SK-N-SH (cell line): ENCODE measurements at regions of chr10 and their contacts with region 1.

Region 1: DNA sequence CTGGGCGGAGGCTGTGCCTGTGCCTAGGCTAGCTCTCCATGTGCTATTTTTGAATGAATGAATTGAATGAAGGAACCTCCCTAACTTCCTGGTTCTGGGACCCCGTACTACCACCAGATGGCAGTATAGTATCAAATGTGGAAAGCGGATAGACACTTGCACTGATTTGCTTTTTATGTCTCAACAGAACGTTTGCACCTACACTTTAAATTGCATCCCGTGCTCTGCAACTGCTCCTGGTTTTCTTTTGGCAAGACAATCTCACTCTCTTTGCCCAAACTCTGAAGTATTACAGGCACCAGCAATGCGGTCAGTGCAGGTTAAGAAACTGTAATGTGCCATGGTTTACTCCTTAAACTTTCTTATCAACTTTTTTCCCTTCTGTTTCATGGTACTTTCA is 6.5 kb downstream of the FZD8 start:
- DNase-seq: peak; percentile 65
- H3K4me3 ChIP-seq: no peak overlapping the region; a peak in 1 of 4 replicates
- H3K27ac ChIP-seq: no peak overlapping the region
- H3K4me1 ChIP-seq: peaks cover 7 to 9% of the 10 kb centered on the region in 2 experiments; a peak in 2 of 4 replicates
- H3K27me3 ChIP-seq: no peaks in the 10 kb centered on the region
- CTCF ChIP-seq: peak; percentile 91
- EP300 ChIP-seq: no peak
- RAD21 ChIP-seq: peak; percentile 95

Region 2: GRCh38 chr10:35613597-35614226 is 21.9 kb before region 1 on chr10:
- CTCF ChIA-PET with region 1: interaction called, 12 read pairs
- POLR2A ChIA-PET with region 1: no interaction called
- DNase-seq: no peak
- H3K4me3 ChIP-seq: no peak overlapping the region
- H3K27ac ChIP-seq: no peak overlapping the region
- H3K4me1 ChIP-seq: no peaks in the 10 kb centered on the region
- H3K27me3 ChIP-seq: peaks cover 13% of the 10 kb centered on the region
- CTCF ChIP-seq: peak; percentile 67
- EP300 ChIP-seq: no peak
- RAD21 ChIP-seq: peak; percentile 45

Region 3: GRCh38 chr10:35795131-35795819 is 159.7 kb after region 1 on chr10:
- CTCF ChIA-PET with region 1: no interaction called
- POLR2A ChIA-PET with region 1: no interaction called
- DNase-seq: no peak
- H3K4me3 ChIP-seq: no peak overlapping the region
- H3K27ac ChIP-seq: no peak overlapping the region
- H3K4me1 ChIP-seq: no peaks in the 10 kb centered on the region
- H3K27me3 ChIP-seq: no peaks in the 10 kb centered on the region
- CTCF ChIP-seq: no peak
- EP300 ChIP-seq: no peak
- RAD21 ChIP-seq: no peak

Region 4: DNA sequence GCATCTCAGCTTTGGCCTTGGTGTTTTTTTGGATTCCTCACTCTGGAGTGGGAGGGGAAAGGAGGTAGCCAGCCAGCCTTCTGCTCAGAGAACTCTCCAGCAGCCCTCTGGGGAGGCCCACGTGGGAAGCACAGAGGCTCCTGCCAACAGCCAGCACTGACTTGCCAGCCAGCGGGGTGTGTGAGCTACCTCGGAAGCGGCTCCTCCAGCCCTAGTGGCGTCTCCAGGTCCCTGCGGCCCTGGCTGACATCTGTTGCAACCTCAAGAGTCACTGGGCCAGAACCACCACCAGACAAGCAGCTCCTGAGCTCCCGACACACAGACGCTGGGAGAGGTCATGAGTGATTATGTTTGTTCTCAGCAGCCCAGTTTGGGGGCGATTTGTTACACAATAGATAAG is 186.7 kb after region 1 on chr10:
- CTCF ChIA-PET with region 1: no interaction called
- POLR2A ChIA-PET with region 1: no interaction called
- DNase-seq: no peak
- H3K4me3 ChIP-seq: no peak overlapping the region
- H3K27ac ChIP-seq: no peak overlapping the region
- H3K4me1 ChIP-seq: peaks cover 0 to 5% of the 10 kb centered on the region in 2 experiments; a peak in 1 of 4 replicates
- H3K27me3 ChIP-seq: no peaks in the 10 kb centered on the region
- CTCF ChIP-seq: no peak
- EP300 ChIP-seq: no peak
- RAD21 ChIP-seq: no peak

Region 5: GRCh38 chr10:35857860-35858259 is 222.3 kb after region 1 on chr10:
- CTCF ChIA-PET with region 1: no interaction called
- POLR2A ChIA-PET with region 1: no interaction called
- DNase-seq: no peak
- H3K4me3 ChIP-seq: no peak overlapping the region
- H3K27ac ChIP-seq: no peak overlapping the region
- H3K4me1 ChIP-seq: no peaks in the 10 kb centered on the region; a peak in 2 of 4 replicates
- H3K27me3 ChIP-seq: no peaks in the 10 kb centered on the region
- CTCF ChIP-seq: no peak
- EP300 ChIP-seq: no peak
- RAD21 ChIP-seq: no peak

Region 6: DNA sequence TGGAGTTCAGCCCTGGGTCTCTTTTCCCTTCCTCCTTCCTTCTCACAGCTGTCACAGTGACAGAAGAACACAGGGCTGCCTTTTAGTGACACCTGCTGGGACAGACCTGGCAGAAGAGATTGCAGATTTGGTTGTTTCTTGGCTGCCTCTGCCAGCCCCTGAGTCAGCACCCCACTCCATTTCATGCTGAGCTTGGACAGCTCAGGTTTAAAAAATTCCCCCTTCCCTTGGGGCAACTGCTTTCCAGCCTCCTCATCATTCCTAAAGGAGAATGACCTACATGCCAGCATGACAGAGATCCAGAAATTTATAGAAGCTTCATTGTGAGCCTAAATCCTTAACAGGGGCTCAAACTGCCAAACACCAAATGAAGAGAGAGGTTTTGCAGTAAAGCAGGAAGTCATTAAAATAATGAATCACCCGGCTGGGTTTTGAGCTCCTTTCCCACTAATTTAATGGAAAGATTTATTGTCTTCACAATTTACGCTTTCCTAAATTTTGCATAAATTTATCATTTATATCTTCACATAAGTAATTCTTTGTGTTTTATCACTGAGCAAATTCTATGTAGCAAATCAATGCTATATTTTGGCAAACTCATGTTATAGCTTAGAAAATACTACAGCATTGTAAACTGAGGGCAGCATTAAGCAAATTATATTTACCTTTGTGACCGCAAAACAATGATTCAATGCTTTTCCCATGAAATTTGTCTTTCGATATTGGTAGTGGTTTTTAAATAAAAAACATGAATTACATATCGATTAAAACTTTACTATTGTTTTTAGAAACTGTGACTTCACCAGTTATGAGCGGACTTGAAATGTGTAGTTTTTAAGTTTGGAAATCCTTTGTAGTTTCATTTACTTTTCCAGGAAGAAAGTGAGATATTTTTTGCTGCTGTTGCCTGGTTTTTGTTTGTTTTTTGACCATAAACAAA is 1090.3 kb after region 1 on chr10:
- CTCF ChIA-PET with region 1: interaction called, 12 read pairs
- POLR2A ChIA-PET with region 1: no interaction called
- DNase-seq: peak; percentile 47
- H3K4me3 ChIP-seq: no peak overlapping the region
- H3K27ac ChIP-seq: peak overlapping the region in 1 of 2 experiments; percentile 54; a peak in 2 of 4 replicates
- H3K4me1 ChIP-seq: peaks cover 5 to 27% of the 10 kb centered on the region in 2 experiments; a peak in 2 of 4 replicates
- H3K27me3 ChIP-seq: no peaks in the 10 kb centered on the region
- CTCF ChIP-seq: peak; percentile 56
- EP300 ChIP-seq: peak in 1 of 2 experiments; percentile 79; a peak in 2 of 4 replicates
- RAD21 ChIP-seq: peak; percentile 75

Region 7: GRCh38 chr10:36771725-36772124 is 1136.1 kb after region 1 on chr10:
- CTCF ChIA-PET with region 1: interaction called, 18 read pairs
- POLR2A ChIA-PET with region 1: no interaction called
- DNase-seq: no peak
- H3K4me3 ChIP-seq: no peak overlapping the region
- H3K27ac ChIP-seq: no peak overlapping the region
- H3K4me1 ChIP-seq: no peaks in the 10 kb centered on the region
- H3K27me3 ChIP-seq: no peaks in the 10 kb centered on the region
- CTCF ChIP-seq: no peak
- EP300 ChIP-seq: no peak
- RAD21 ChIP-seq: no peak

Region 8: DNA sequence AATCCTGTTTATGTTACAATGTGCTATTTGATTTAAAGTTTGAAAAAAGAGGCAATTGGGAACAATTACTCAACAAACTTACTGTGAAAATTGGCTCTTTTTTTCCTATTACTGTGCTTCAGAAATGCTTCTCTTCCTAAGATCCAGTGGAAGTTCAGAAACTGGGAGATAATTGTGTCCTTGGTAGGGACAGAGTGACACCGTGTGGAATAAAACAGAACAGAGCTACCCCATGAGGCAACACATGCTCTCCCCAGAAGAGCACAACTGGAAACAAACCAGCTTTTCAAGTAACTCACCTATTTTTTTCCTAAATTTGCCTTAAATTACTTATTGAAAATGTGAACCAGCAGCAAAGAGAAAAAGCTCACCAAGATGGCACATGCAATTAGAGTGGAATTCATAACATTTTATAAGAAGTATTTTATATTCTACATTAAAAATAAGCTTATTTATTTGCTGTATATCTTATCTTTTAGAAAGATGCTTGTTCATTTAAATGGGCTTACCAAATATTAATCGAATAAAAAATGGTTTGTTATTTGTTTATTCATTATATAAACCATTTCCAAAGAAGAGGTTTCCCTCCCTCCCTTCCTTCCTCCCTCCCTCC is 1143.8 kb after region 1 on chr10:
- CTCF ChIA-PET with region 1: interaction called, 55 read pairs
- POLR2A ChIA-PET with region 1: no interaction called
- DNase-seq: peak; percentile 74
- H3K4me3 ChIP-seq: peak overlapping the region in 1 of 2 experiments; percentile 28; a peak in 1 of 4 replicates
- H3K27ac ChIP-seq: no peak overlapping the region
- H3K4me1 ChIP-seq: peaks cover 0 to 13% of the 10 kb centered on the region in 2 experiments; a peak in 2 of 4 replicates
- H3K27me3 ChIP-seq: no peaks in the 10 kb centered on the region
- CTCF ChIP-seq: peak; percentile 85
- EP300 ChIP-seq: no peak
- RAD21 ChIP-seq: peak; percentile 96

Region 9: GRCh38 chr10:36880898-36881297 is 1245.3 kb after region 1 on chr10:
- CTCF ChIA-PET with region 1: interaction called, 37 read pairs
- POLR2A ChIA-PET with region 1: no interaction called
- DNase-seq: peak; percentile 23
- H3K4me3 ChIP-seq: no peak overlapping the region
- H3K27ac ChIP-seq: no peak overlapping the region
- H3K4me1 ChIP-seq: no peaks in the 10 kb centered on the region
- H3K27me3 ChIP-seq: peaks cover 5% of the 10 kb centered on the region; the same call in 1 of the 2 replicates
- CTCF ChIP-seq: peak; percentile 61
- EP300 ChIP-seq: no peak
- RAD21 ChIP-seq: peak; percentile 73